RWPE1 (cell line): ENCODE measurements at regions of chr11 and their contacts with region 1.

Region 1: GRCh38 chr11:94623120-94623735 is 56.1 kb downstream of the PIWIL4 start:
- DNase-seq: peak; percentile 83
- H3K27ac ChIP-seq: no peak overlapping the region
- CTCF ChIP-seq: peak; percentile 85

Region 2: GRCh38 chr11:94705896-94706615 is 82.8 kb after region 1 on chr11:
- CTCF ChIA-PET with region 1: interaction called, 17 read pairs
- POLR2A ChIA-PET with region 1: no interaction called
- DNase-seq: peak; percentile 95
- H3K27ac ChIP-seq: peak overlapping the region; percentile 97
- CTCF ChIP-seq: no peak

Region 3: GRCh38 chr11:94767761-94768601 is 144.8 kb after region 1 on chr11 and contains the start of gene AMOTL1:
- CTCF ChIA-PET with region 1: interaction called, 12 read pairs
- POLR2A ChIA-PET with region 1: no interaction called
- DNase-seq: peak; percentile 68
- H3K27ac ChIP-seq: peak within 1 kb of the TSS; percentile 94
- CTCF ChIP-seq: no peak

Region 4: GRCh38 chr11:94897330-94897768 is 274.1 kb after region 1 on chr11:
- CTCF ChIA-PET with region 1: interaction called, 14 read pairs
- POLR2A ChIA-PET with region 1: no interaction called
- DNase-seq: peak; percentile 48
- H3K27ac ChIP-seq: no peak overlapping the region
- CTCF ChIP-seq: peak; percentile 89

Region 5: DNA sequence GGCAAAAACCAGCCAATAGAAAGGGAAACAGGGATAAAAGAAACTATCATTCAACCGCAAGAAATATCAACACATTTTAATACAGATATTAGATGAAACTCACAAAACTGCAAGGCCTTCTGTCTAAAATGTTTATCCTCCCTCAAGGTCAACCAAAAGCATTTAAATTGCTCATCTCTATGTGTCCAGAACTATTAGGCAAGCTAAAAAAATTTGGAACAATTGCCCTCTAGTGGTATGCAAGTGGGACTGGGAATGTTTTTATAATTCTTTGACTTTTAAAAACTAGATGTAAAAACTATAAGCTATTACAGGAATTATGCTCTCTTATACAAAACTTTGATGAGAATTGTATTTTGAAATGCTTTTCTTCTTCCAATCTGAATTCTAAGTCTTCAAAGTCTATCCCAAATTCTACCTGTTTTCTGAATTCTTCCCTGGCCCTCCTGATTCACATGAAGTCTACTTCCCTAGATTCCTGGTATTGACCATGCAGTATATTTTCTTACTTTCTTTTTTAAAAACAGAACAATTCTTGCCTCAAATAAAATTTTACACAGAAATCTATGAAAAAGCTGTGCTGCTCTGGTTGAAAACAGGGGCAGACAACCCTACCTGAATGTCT is 345.2 kb after region 1 on chr11:
- CTCF ChIA-PET with region 1: interaction called, 13 read pairs
- POLR2A ChIA-PET with region 1: no interaction called
- DNase-seq: peak; percentile 26
- H3K27ac ChIP-seq: no peak overlapping the region
- CTCF ChIP-seq: peak; percentile 68